Activated T-helper 2 cell treated with anti-CD3 and anti-CD28 coated beads, Interferon-gamma antibody, Interleukin-2, Interleukin-4, amounts not matched to agents 10 μg/mL and 5 μg/mL and 100 μg/mL, durations not matched to agents 14 hours and 24 hours and 36 hours (primary cell): ENCODE measurements at regions of chr2 and their contacts with region 1.

Region 1: GRCh38 chr2:173210270-173211196 is 134.9 kb downstream of the MAP3K20 start:
- DNase-seq: peak; percentile 32
- H3K4me3 Mint-ChIP-seq: no peak overlapping the region
- H3K27ac Mint-ChIP-seq: peak overlapping the region; percentile 38
- H3K4me1 Mint-ChIP-seq: peaks cover 7% of the 10 kb centered on the region
- H3K27me3 Mint-ChIP-seq: peaks cover 3% of the 10 kb centered on the region

Region 2: DNA sequence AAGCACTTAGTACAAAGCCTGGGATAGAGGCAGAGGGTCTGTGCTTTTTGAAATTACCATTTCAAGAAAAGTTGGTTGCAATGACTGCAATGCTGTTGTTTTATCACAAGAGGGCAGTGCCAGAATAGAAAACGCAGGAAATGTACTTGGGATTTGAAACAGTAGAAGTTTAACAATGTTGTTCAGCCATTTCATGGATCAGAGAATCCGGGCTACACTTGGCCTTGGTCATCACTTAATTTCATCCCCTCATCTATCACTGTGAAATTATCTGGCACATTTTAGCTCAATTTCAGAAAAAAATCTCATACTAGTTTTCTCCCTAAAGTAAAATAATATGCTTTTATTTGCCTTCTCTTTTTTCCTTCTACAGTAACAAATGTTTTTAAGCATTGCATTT is 404.0 kb before region 1 on chr2:
- intact Hi-C with region 1: loop called (anchors 10 kb)
- DNase-seq: no peak
- H3K4me3 Mint-ChIP-seq: no peak overlapping the region
- H3K27ac Mint-ChIP-seq: no peak overlapping the region
- H3K4me1 Mint-ChIP-seq: peaks cover 1% of the 10 kb centered on the region
- H3K27me3 Mint-ChIP-seq: peaks cover 4% of the 10 kb centered on the region

Region 3: DNA sequence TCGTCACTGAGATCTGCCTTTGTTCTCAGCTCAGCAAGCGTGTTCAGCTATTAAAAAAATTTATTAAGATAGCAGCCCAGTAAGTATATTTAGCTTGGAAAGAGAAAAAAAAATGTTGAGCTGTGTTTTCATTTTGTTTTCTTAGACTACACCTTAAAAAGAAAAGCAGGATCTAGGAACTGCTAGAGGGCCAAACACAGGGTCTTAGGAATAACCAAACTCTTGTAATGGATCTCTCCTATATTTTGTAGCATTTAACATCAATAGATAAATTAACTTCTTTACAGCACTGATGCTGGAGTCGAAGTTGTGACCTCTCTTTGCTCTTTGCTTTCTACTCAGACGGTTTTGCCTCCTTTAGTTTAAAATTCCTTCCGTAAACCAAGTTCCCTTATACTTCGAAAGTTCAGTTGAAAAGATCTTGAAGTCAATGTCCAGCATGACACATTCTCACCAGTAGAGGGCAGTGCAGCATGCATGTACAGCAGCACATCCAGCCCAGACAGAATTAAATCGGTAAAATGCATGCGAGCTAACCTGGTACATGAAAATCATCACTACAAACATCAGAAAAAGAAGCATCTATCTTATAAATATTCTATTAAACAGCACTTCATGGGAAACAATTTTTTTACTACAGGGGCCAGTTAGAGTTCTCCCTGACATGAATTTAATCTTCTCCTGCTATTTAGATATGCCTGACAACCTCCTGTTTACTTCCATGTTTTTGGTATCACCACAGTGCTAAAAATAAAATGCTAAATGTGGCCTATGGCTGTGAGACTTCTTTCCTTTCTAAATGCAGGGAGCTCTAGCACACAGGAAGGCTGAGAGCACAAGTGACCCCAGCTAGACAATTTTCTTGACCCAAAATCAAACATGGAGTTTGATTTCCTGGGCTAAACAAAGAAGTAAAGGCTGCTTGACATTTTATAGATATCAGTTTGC is 183.1 kb before region 1 on chr2:
- intact Hi-C with region 1: loop called (anchors 1 kb)
- DNase-seq: peak; percentile 60
- H3K4me3 Mint-ChIP-seq: no peak overlapping the region
- H3K27ac Mint-ChIP-seq: no peak overlapping the region
- H3K4me1 Mint-ChIP-seq: peaks cover 4% of the 10 kb centered on the region
- H3K27me3 Mint-ChIP-seq: peaks cover 17% of the 10 kb centered on the region

Region 4: DNA sequence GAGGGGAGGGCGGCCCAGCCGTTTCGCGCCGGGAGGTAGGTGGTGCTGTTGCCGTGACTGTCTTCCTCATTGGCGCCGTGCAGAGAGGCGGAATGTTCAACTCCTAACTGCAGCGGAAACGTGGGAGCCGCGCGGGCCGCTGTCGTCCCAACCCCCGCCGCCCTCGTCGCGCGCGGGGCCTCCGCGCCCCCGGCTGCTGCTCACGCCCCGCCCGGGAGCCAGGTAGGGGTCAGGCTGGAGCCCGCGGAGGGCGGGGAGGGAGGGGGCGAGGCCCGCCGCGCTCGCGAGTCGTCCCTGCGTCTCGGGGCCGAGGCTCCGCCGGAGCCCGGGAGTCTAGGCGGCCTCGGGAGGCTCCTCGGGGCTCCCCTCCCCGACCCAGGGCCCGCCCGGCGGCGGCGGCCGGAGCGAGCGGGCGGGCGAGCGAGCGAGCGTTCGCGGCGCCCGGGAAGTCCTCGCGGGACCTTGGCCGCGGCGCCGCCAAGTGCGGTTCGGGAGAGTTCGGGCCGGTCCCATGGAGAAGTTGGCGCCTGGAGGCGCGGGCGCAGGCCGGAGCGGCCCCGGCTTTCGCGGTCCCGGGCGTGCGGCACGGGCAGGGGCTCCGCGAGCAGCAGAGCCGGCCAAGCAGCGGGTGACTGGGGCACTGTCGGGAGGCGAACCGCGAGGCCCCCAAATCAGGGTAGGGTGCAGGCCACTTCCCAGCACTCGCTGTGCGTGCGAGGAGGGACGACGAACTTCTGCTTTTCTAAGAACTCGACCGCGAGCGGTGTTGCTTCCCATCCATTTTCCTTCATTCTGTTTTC is 134.6 kb before region 1 on chr2 and contains the start of gene MAP3K20:
- intact Hi-C with region 1: loop called (anchors 1 kb)
- DNase-seq: peak; percentile 44
- H3K4me3 Mint-ChIP-seq: peak within 1 kb of the TSS; percentile 82
- H3K27ac Mint-ChIP-seq: peak within 1 kb of the TSS; percentile 75
- H3K4me1 Mint-ChIP-seq: peaks cover 29% of the 10 kb centered on the region
- H3K27me3 Mint-ChIP-seq: peaks cover 30% of the 10 kb centered on the region
- total RNA-seq, gene MAP3K20: 26.5 and 26.8 TPM in 2 replicates

Region 5: DNA sequence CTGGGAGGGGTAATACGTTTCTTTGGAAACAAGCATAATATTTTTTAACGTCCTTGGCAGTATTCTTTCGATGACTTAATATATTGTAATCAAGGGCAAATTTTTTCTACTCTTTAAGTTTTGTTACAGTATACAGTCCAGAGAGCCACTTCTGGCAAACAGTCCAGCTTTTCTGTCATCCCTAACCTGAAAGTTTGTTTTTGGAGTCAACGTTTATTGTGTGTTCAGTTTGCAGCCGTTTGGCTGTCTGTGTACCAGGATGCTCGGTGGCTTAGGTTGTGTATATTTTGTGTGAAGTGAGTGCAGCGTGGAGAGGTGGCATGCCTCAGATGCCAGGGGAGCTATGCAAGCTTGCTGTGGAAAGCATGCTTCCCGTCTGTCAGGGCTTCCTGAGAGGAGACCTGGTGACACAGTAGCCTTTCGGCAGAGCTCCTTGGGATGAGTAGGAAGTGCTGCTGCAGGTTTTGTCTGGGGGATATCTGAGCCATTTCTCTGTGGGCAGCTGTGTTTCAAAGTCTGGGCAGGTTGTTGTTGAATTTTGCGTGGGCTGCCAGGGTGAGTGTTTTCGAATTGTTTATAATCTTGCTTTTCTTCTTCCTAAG is 120.2 kb before region 1 on chr2:
- intact Hi-C with region 1: loop called (anchors 5 kb)
- DNase-seq: no peak
- H3K4me3 Mint-ChIP-seq: no peak overlapping the region
- H3K27ac Mint-ChIP-seq: no peak overlapping the region
- H3K4me1 Mint-ChIP-seq: peaks cover 5% of the 10 kb centered on the region
- H3K27me3 Mint-ChIP-seq: peaks cover 10% of the 10 kb centered on the region

Region 6: DNA sequence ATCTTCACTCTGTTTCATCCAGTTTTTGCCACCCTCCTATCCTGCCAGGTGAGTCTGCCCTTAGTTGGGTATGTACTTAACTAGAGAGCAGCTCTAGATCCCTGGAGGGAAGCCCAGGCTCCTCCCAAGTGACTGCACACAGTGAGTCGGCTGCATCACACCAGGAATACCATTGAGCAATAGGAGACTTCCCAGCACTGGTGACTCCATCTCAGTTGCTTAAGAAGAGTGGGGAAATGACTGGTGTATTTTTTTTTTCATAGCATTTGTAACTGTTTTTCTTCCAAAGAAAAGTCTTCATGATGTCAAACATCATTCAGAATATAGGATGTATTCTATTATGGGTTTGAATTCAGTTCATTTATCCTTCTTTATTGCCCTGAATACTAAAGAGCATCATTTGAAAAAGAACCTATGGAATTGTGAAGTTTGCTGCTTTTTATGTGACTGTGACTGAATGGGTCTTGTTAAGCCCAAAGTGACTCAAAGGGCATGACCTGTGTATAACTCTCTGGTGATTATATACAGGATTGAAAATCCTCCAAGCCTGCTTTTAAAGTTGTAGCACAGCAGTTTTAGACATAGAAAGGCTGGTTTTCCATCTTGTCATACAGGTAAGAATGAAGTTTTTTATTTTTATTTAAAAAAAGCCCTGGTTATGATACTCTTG is 50.6 kb before region 1 on chr2:
- intact Hi-C with region 1: loop called (anchors 10 kb)
- DNase-seq: no peak
- H3K4me3 Mint-ChIP-seq: no peak overlapping the region
- H3K27ac Mint-ChIP-seq: no peak overlapping the region
- H3K4me1 Mint-ChIP-seq: peaks cover 7% of the 10 kb centered on the region
- H3K27me3 Mint-ChIP-seq: peaks cover 6% of the 10 kb centered on the region